Activated CD8-positive, alpha-beta T cell treated with anti-CD3 and anti-CD28 coated beads for 36 hours (primary cell): ENCODE measurements at regions of chr11 and their contacts with region 1.

Region 1: GRCh38 chr11:76788661-76789439 is 5.7 kb downstream of the TSKU start:
- DNase-seq: no peak
- ATAC-seq: no peak
- H3K4me3 Mint-ChIP-seq: no peak overlapping the region
- H3K27ac Mint-ChIP-seq: no peak overlapping the region
- H3K4me1 Mint-ChIP-seq: peaks cover 17% of the 10 kb centered on the region
- H3K27me3 Mint-ChIP-seq: peaks cover 17% of the 10 kb centered on the region
- CTCF ChIP-seq: no peak

Region 2: DNA sequence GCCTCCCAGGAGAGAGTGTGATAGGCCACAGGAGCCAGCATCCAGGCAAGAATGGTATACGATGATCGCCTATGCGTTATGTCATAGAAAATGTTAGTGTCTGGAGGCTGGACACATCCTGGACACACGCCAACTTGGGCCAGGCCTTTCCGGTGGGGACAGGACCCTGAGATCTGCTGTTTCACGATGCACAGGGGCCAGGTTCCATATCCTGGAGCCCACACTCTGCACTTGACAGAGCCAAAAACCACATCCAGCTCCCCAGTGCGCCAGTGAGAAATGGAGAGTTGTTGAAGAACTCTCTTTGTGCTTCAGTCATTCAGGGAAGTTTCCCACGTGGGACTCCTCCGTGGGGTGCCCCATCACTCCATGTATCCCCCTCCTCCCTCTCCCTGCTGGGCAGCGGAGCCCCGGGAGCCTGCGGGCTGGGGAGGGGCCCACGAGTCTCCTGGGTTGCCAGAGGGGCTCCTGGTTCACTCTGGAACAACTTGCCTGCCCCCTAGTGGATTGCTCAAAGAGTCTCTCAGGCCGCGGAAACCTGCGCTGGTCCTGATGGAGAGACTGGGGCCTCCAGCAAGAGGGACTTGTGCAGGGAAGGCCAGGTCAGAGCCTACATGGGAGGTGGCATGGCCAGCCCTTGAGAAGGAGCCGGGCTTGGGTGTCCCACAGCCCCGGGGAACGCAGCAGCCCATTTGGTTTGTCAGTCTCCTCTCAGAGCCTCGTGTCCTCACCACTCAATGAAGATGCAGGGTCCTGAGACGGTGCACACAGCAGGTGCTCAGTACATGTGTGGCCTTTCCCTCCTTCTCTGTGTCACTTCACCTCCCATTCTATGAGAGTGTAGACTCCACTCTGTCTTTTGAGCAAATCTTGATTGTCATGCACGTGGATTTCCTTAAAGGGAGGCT is 108.1 kb before region 1 on chr11:
- CTCF ChIA-PET with region 1: no interaction called
- POLR2A ChIA-PET with region 1: no interaction called
- intact Hi-C with region 1: no loop called
- DNase-seq: peak; percentile 79
- ATAC-seq: peak; percentile 78
- H3K4me3 Mint-ChIP-seq: no peak overlapping the region
- H3K27ac Mint-ChIP-seq: no peak overlapping the region
- H3K4me1 Mint-ChIP-seq: peaks cover 35% of the 10 kb centered on the region
- H3K27me3 Mint-ChIP-seq: peaks cover 7% of the 10 kb centered on the region
- CTCF ChIP-seq: peak; percentile 93

Region 3: GRCh38 chr11:76770642-76771445 is 18.0 kb before region 1 on chr11:
- CTCF ChIA-PET with region 1: no interaction called
- POLR2A ChIA-PET with region 1: no interaction called
- intact Hi-C with region 1: no loop called
- DNase-seq: no peak
- ATAC-seq: peak; percentile 31
- H3K4me3 Mint-ChIP-seq: no peak overlapping the region
- H3K27ac Mint-ChIP-seq: no peak overlapping the region
- H3K4me1 Mint-ChIP-seq: peaks cover 18% of the 10 kb centered on the region
- H3K27me3 Mint-ChIP-seq: no peaks in the 10 kb centered on the region
- CTCF ChIP-seq: no peak

Region 4: GRCh38 chr11:76799066-76799804 is 10.4 kb after region 1 on chr11:
- CTCF ChIA-PET with region 1: interaction called, 17 read pairs
- POLR2A ChIA-PET with region 1: no interaction called
- intact Hi-C with region 1: no loop called
- DNase-seq: peak; percentile 84
- ATAC-seq: peak; percentile 86
- H3K4me3 Mint-ChIP-seq: peak overlapping the region; percentile 15
- H3K27ac Mint-ChIP-seq: no peak overlapping the region
- H3K4me1 Mint-ChIP-seq: peaks cover 22% of the 10 kb centered on the region
- H3K27me3 Mint-ChIP-seq: no peaks in the 10 kb centered on the region
- CTCF ChIP-seq: peak; percentile 95

Region 5: DNA sequence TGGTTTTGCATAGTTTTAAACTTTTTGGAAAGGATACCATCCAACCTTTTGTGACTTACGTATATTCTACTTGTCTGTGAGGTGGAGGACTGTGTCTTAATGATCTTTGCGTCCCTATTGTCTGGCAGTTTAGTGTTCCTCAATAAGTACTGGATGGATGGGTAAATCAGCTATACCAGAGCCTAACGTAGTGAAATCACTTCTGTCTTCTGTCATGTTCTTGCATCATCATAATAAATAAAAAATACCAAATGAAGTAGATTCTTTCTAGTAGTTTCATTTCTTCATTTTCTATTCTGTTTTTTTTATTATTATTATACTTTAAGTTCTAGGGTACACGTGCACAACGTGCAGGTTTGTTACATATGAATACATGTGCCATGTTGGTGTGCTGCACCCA is 138.3 kb after region 1 on chr11:
- CTCF ChIA-PET with region 1: no interaction called
- POLR2A ChIA-PET with region 1: no interaction called
- intact Hi-C with region 1: no loop called
- DNase-seq: no peak
- ATAC-seq: no peak
- H3K4me3 Mint-ChIP-seq: no peak overlapping the region
- H3K27ac Mint-ChIP-seq: no peak overlapping the region
- H3K4me1 Mint-ChIP-seq: no peaks in the 10 kb centered on the region
- H3K27me3 Mint-ChIP-seq: no peaks in the 10 kb centered on the region
- CTCF ChIP-seq: no peak